Panc1 (cell line): ENCODE measurements at regions of chr10 and their contacts with region 1.

Region 1: DNA sequence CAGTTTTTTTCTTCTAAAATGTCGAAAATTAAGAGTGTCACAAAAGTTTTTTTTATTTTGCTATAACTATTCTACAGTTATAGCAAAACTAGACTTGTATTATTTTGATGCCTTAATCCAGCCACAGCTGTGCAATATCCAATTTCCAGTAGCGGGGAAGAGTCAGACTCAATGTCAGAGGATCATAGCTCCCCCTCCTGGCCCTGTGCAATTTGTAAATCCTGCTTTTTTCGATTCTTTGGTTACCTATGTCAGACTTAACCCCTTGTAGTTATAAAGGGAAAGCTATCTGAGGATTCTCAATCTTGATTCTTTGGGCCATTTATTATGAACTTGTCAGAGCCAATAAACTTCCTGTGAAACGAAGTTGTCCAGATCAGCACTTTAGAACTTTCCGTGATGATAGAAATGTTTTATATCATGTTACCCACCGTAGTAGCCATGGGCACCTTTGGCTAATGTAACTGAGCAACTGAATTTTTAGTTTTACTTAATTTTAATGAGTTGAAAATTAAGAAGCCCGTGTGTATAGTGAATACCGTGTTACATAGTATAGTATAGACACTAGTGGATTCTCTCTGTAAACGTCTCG is 87.7 kb upstream of the PRKCQ start:
- DNase-seq: no peak
- ATAC-seq: peak; percentile 65; the same call in 1 of the 2 replicates
- H3K4me3 ChIP-seq: no peak overlapping the region
- H3K27ac ChIP-seq: no peak overlapping the region
- H3K4me1 ChIP-seq: no peaks in the 10 kb centered on the region
- H3K27me3 ChIP-seq: peaks cover 8% of the 10 kb centered on the region; the same call in 1 of the 2 replicates
- CTCF ChIP-seq: peak; percentile 65

Region 2: GRCh38 chr10:6416892-6417512 is 250.8 kb before region 1 on chr10:
- CTCF ChIA-PET with region 1: no interaction called
- POLR2A ChIA-PET with region 1: no interaction called
- in situ Hi-C with region 1: no loop called
- intact Hi-C with region 1: loop called (anchors 5 kb)
- DNase-seq: peak; percentile 24
- ATAC-seq: peak; percentile 79
- H3K4me3 ChIP-seq: no peak overlapping the region
- H3K27ac ChIP-seq: no peak overlapping the region
- H3K4me1 ChIP-seq: no peaks in the 10 kb centered on the region
- H3K27me3 ChIP-seq: peaks cover 7% of the 10 kb centered on the region
- CTCF ChIP-seq: peak; percentile 60

Region 3: DNA sequence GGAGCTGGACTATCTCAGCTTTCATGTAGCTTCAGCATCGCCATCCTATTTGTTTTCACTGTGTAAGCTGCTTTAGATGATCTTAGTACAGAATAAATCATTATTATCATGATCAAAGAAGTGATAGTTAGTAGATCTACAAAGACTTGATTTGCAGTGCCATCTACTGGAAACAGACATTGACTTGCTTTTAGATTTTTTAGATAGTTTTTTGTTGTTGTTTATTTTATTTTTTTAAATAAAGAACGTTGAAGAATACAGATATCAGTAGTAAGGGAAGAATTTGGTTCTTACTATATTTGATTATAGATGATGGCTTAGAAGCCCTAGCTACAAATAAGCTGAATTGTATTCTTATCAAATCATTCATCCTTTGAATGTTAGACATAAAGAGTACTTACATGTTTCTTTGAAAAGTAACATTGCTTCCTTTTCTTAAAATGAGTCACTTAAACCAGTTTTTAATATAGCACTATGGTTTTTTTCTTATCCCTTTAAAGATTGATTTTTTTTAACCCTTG is 749.4 kb after region 1 on chr10:
- CTCF ChIA-PET with region 1: no interaction called
- POLR2A ChIA-PET with region 1: no interaction called
- in situ Hi-C with region 1: no loop called
- intact Hi-C with region 1: loop called (anchors 5 kb)
- DNase-seq: no peak
- ATAC-seq: no peak
- H3K4me3 ChIP-seq: no peak overlapping the region
- H3K27ac ChIP-seq: no peak overlapping the region
- H3K4me1 ChIP-seq: no peaks in the 10 kb centered on the region
- H3K27me3 ChIP-seq: no peaks in the 10 kb centered on the region; the same call in 1 of the 2 replicates
- CTCF ChIP-seq: peak; percentile 33; the same call in 1 of the 2 replicates